Ascending aorta (tissue), 2 donors: ENCODE measurements at regions of chr7 and their contacts with region 1.

Region 1: DNA sequence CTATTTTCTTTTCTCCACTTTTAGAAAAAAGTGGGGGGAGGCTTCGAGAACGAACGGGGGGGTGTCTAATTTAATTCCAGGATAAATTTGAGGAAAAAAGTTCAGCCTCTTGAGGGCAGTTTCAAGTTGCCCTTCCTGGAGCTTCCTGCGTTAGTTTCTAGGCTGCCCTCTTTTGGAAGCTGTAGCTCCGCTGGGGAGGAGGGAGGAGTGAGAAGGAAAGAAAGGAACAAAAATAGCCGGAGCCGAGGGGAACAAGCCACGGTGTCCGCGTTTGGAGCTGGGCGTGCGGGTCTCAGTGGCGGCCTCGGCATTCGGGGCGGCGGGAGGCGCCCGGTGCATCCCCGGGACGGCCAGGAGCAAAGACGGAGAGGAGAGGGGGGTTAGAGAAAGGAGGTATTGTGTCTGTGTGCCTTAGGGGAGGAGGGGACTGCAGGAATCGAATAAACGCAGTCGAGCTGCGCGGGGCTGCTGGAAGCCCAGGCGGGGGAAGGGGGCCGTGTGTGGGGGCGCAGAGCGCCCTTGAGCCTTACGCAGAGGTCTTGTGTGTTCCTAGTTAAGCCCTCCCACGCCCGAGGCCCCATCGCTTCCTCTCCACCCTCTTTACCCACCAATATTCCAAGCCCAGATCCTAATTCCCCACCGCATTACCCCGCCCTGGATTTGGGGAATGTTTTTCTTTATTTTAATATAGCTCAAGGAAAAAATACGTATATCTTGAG is 2.0 kb upstream of the TNRC18 start:
- DNase-seq: peak in 1 of 2 donors; percentile 80
- H3K4me3 ChIP-seq: peak overlapping the region; percentile 82 to 84
- H3K27ac ChIP-seq: peak overlapping the region; percentile 95 to 98
- H3K4me1 ChIP-seq: peaks cover 0 to 9% of the 10 kb centered on the region in 2 donors
- H3K27me3 ChIP-seq: no peaks in the 10 kb centered on the region
- CTCF ChIP-seq: no peak

Region 2: GRCh38 chr7:5354460-5355232 is 71.0 kb before region 1 on chr7:
- intact Hi-C with region 1: no loop called
- DNase-seq: no peak
- H3K4me3 ChIP-seq: no peak overlapping the region
- H3K27ac ChIP-seq: peak overlapping the region; percentile 17 to 21
- H3K4me1 ChIP-seq: peaks cover 10 to 37% of the 10 kb centered on the region in 2 donors
- H3K27me3 ChIP-seq: no peaks in the 10 kb centered on the region
- CTCF ChIP-seq: no peak

Region 3: GRCh38 chr7:5370454-5371353 is 55.0 kb before region 1 on chr7:
- intact Hi-C with region 1: loop called (anchors 1 kb)
- DNase-seq: no peak
- H3K4me3 ChIP-seq: no peak overlapping the region
- H3K27ac ChIP-seq: peak overlapping the region in 1 of 2 donors; percentile 35
- H3K4me1 ChIP-seq: peaks cover 0 to 7% of the 10 kb centered on the region in 2 donors
- H3K27me3 ChIP-seq: no peaks in the 10 kb centered on the region
- CTCF ChIP-seq: no peak

Region 4: DNA sequence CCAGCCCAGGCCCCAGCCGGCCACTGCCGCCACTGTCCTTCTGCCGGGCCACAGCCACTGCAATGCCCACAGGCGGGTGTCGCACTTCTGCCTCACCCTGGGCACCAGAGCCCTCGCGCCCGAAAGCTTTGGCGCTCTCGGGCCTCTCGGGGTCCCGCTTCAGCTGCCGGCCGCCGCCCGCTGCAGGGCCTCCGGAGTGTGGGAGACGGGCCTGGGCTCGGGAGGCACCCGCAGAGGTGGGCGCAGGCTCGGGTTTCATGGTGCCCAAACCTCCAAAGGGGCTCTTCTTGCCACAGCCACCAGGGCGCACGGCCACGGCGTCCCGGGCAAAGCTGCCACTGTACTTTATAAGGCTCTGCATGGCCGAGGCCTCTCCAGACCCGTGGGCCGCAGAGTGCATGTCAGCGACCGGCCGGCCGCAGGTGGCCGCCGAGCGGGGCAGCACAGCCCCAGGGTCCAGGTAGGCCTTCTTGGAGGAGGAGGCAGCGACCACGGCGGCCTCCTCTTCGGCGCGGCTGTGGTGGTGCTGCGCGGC is 37.9 kb before region 1 on chr7:
- intact Hi-C with region 1: loop called (anchors 2 kb)
- DNase-seq: no peak
- H3K4me3 ChIP-seq: no peak overlapping the region
- H3K27ac ChIP-seq: no peak overlapping the region
- H3K4me1 ChIP-seq: peaks cover 0 to 21% of the 10 kb centered on the region in 2 donors
- H3K27me3 ChIP-seq: no peaks in the 10 kb centered on the region
- CTCF ChIP-seq: no peak

Region 5: DNA sequence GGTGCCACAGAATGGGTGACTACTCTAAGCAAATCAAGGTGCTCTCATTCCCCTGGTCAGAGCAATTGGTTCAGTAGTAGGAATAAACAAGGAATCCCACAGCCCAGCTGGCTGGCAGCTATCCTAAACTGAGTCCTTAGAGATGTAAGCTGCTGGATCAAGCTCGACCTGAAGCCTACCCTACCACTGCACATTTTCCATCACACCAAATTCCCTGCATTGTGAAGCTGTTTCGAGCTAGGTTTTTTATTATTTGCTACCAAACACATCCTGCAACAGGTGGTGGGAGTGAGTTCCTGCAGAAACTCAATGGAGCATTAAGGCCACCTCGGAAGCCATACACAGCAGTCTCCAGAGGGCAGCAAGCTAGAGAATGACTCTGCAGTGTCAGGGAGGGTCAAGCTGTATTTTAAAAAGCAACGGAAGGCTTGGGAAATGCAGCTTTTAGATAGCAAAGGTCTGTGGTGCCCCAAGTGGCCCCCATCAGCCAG is 31.6 kb after region 1 on chr7:
- intact Hi-C with region 1: loop called (anchors 2 kb)
- DNase-seq: no peak
- H3K4me3 ChIP-seq: peak overlapping the region in 1 of 2 donors; percentile 24
- H3K27ac ChIP-seq: peak overlapping the region; percentile 68 to 77
- H3K4me1 ChIP-seq: peaks cover 0 to 11% of the 10 kb centered on the region in 2 donors
- H3K27me3 ChIP-seq: no peaks in the 10 kb centered on the region
- CTCF ChIP-seq: no peak

Region 6: DNA sequence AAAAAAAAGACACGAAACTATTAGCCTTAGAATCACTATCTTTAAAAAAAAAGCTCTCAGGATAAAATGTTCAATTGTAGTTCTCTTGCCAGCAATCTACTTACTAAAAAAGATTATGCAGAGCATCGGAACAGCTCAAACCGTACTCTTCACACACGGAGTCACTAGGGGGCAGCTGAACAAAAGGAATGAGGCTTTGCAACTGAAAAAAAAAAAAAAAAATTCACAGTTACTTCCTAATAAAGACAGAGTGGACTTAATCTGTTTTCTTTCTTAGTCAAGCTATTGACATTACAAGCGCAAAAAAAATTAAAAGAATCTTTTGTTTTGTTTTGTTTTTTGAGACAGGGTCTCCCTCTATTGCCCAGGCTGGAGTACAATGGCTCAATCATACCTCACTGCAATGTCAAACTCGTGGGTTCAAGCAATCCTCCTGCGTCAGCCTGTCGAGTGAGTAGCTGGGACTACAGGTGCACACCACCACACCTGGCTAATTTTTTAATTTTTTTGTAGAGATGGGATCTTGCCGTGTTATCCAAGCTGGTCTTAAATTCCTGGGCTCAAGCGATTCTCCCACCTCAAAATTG is 571.6 kb after region 1 on chr7:
- intact Hi-C with region 1: no loop called
- DNase-seq: no peak
- H3K4me3 ChIP-seq: no peak overlapping the region
- H3K27ac ChIP-seq: peak overlapping the region; percentile 6 to 47
- H3K4me1 ChIP-seq: no peaks in the 10 kb centered on the region
- H3K27me3 ChIP-seq: no peaks in the 10 kb centered on the region
- CTCF ChIP-seq: peak; percentile 48 to 60 (median 55)